ENCODE measurements at regions of chr2 and their contacts with region 1.

Region 1: DNA sequence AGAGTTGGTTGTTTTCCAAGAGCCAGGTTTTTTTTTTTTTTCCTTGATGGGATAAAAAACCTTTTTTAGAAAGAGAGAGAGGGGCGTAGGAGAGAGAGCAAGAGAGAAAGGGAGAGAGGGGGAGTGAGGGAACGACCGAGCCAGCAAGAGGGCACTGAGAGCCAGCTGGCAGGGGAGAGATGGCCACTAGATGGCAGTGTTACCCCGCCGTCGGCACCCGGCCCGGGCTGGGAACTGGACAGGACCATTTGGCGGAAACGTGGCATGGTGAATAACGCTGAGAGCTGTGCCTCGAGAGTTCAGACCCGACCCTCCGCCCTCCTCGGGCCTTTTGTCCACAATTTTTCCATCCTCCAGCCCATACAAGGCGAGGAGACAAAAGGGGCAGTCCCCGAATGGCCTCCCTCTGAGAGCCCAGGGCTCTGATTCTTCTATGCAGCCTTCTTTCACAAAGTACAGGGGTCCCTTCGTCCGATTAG is 286.7 kb upstream of the VRK2 start:
- DNase-seq: peak; percentile 79
- CTCF ChIP-seq: peak; percentile 92

Region 2: GRCh38 chr2:57776916-57777315 is 17.1 kb after region 1 on chr2:
- CTCF ChIA-PET with region 1: interaction called, 10 read pairs
- POLR2A ChIA-PET with region 1: no interaction called
- DNase-seq: no peak
- CTCF ChIP-seq: no peak

Region 3: DNA sequence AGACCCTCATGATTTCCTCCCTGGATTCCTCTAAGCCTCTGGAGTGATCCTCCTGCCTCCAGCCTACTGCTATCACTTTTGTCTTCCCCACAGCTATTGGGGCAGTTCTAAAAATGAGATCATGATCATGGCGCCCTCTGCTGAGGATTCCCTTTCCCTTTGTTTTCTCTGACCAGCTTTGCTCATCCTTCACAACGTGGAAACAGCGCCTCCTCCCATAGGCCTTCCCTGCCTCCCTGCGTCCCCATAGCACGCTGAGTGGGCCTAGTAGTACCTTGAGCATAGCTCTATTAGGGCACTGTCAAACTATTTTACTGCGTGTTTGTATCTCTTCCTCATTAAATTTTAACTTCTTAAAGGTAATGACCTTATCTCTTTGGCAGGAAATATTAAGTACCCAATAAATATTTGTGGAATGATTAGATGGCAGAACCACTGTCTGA is 688.2 kb after region 1 on chr2:
- CTCF ChIA-PET with region 1: interaction called, 28 read pairs
- POLR2A ChIA-PET with region 1: no interaction called
- DNase-seq: peak; percentile 22
- CTCF ChIP-seq: peak; percentile 62

Measured in GM10248 (cell line).